ENCODE measurements at regions of chr6 and their contacts with region 1.

Region 1: DNA sequence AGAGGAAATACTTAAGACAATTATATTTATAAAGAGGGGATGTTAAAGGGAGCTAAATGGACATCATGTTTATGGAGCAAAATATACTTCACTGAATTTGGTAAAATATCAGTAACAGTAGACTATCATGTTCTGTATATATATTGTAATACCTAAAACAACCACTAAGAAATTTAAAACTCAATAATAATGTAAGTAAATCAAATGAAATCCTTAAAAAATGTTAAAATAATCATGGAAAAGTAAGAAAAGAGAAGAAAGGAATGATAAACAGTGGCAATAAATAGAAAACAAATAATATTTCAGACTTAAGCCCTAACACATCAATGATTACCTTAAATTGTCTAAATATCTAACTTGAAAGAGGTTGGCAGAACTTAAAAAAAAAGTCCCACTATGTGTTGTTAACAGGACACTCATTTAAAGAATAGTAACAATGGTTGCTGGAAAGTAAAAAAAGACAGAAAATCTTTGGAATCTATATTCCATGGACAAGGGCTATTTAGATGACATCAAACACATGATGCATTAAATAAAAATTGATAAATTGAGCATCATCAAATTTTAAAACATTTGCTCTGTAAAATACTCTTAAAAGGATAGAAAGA is 842.2 kb upstream of the MAP3K7 start:
- DNase-seq: no peak
- ATAC-seq: no peak
- H3K4me3 ChIP-seq: no peak overlapping the region
- H3K4me3 Mint-ChIP-seq: no peak overlapping the region
- H3K27ac ChIP-seq: no peak overlapping the region
- H3K27ac Mint-ChIP-seq: no peak overlapping the region
- H3K4me1 ChIP-seq: no peaks in the 10 kb centered on the region
- H3K4me1 Mint-ChIP-seq: no peaks in the 10 kb centered on the region
- H3K27me3 ChIP-seq: no peaks in the 10 kb centered on the region
- H3K27me3 Mint-ChIP-seq: no peaks in the 10 kb centered on the region

Region 2: GRCh38 chr6:91376686-91377085 is 52.4 kb before region 1 on chr6:
- CTCF ChIA-PET with region 1: no interaction called
- POLR2A ChIA-PET with region 1: interaction called in 1 of 2 experiments, 11 read pairs
- DNase-seq: no peak
- ATAC-seq: no peak
- H3K4me3 ChIP-seq: no peak overlapping the region
- H3K4me3 Mint-ChIP-seq: no peak overlapping the region
- H3K27ac ChIP-seq: no peak overlapping the region
- H3K27ac Mint-ChIP-seq: no peak overlapping the region
- H3K4me1 ChIP-seq: no peaks in the 10 kb centered on the region
- H3K4me1 Mint-ChIP-seq: no peaks in the 10 kb centered on the region
- H3K27me3 ChIP-seq: no peaks in the 10 kb centered on the region
- H3K27me3 Mint-ChIP-seq: peaks cover 0 to 4% of the 10 kb centered on the region in 2 donors